ENCODE measurements at regions of chr17 and their contacts with region 1.

Region 1: DNA sequence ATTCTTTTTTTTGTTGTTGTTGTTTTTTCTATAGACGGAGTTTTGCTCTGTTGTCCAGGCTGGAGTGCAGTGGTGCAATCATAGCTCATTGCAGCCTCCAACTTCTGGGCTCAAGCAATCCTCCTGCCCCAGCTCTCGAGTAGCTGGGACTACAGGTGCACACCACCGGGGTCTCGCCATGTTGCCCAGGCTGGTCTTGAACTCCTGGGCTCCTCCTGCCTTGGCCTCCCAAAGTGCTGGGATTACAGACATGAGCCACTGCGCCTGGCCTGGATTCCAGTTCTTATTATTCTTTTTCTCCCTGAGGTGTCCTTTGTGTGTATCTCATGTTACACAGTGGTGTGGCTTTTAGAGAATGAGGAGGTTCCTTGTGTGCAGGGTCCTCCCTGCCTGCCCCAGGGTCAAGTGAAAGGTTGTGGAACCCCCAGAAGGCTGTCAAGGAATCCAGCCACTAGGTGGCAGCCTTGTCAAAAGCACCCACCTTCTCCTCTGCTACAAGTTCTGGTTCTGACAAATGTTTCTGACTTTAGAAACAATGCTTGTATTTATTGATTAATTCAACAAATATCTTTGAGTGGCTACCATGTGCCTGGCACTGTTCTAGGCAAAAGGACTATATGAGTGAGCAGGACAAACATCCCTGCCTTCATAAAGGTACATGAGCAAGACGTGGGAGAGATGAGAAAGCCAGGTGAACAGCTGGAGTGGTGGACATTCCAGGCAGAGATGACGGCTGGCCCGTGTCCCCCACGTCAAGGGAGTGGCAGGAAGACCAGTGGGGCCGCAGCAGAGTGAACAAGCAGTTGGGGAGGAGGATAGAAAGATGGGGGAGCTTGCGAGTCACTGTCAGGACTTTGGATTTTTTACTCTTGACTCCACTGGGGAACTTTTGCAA is 112.4 kb downstream of the SPECC1 start:
- DNase-seq: peak; percentile 47 to 59
- ATAC-seq: peak in 2 of 4 donors; percentile 35 to 62
- H3K4me3 ChIP-seq: no peak overlapping the region
- H3K27ac ChIP-seq: no peak overlapping the region
- H3K4me1 ChIP-seq: peaks cover 10% of the 10 kb centered on the region
- H3K27me3 ChIP-seq: no peaks in the 10 kb centered on the region
- CTCF ChIP-seq: peak; percentile 77

Region 2: GRCh38 chr17:19992803-19993713 is 128.5 kb before region 1 on chr17:
- intact Hi-C with region 1: loop called (anchors 2 to 5 kb)
- DNase-seq: peak; percentile 87 to 93
- ATAC-seq: peak; percentile 99 to 100 (median 99)
- H3K4me3 ChIP-seq: no peak overlapping the region
- H3K27ac ChIP-seq: no peak overlapping the region
- H3K4me1 ChIP-seq: peaks cover 4% of the 10 kb centered on the region
- H3K27me3 ChIP-seq: no peaks in the 10 kb centered on the region
- CTCF ChIP-seq: peak; percentile 79

Region 3: GRCh38 chr17:20009302-20010098 is 112.1 kb before region 1 on chr17 and contains the start of gene SPECC1:
- intact Hi-C with region 1: loop called in 1 of 2 experiments (anchors 5 kb)
- DNase-seq: peak; percentile 85 to 89
- ATAC-seq: peak; percentile 46 to 98 (median 95)
- H3K4me3 ChIP-seq: peak within 1 kb of the TSS; percentile 72
- H3K27ac ChIP-seq: peak within 1 kb of the TSS; percentile 43
- H3K4me1 ChIP-seq: peaks cover 4% of the 10 kb centered on the region
- H3K27me3 ChIP-seq: peaks cover 0 to 63% (median 7%) of the 10 kb centered on the region in 3 donors
- CTCF ChIP-seq: peak; percentile 97
- total RNA-seq, gene SPECC1: 4.7 to 11.3 (median 9.6) TPM

Region 4: DNA sequence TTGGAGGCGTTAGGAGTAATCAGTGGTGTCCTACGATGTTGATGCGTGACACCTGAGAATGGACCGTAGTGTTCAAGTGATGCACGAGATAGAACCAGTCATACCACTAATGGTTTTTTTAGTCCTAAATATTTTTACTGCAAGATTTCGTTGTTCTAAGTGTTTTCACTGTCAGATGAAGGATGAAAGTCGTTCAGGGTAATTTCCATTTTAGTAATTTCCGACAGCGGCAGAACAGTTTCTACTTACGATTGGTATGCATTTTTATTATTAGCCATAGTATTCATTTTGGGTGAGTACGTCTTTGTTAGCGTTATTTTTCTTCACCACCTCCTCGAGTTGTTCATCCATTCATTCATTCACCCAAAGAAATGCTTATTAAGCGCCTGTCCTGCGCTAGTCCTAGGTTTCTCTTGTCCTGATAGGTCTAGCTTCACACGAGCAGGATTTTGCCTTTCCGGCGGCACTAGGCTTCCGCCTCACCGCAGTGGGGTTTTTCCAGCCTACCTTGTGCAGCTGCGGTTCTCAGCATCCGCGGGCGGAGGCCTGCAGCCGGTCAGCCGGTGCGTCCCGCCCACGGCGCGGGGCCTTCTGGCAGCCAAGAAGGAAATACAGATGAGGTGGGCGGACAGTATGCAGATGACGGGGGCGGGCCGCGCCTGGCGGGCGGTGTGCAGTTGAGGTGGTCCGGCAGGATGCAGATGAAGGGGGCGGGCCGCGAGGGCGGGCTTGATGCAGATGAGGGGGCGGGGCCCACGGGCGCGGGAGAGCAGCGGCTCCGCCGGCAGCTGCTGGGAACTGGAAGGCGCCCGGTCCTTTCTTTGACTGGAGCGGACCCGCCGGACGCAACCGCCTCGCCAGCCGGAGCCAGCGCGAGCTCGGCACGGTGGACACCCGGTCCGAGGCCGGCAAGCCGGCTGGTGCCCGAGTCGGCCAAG is 33.9 kb after region 1 on chr17:
- intact Hi-C with region 1: no loop called
- DNase-seq: peak; percentile 95 to 96
- ATAC-seq: peak; percentile 92 to 99 (median 97)
- H3K4me3 ChIP-seq: peak overlapping the region; percentile 75
- H3K27ac ChIP-seq: no peak overlapping the region
- H3K4me1 ChIP-seq: peaks cover 8% of the 10 kb centered on the region
- H3K27me3 ChIP-seq: peaks cover 3 to 38% (median 4%) of the 10 kb centered on the region in 3 donors
- CTCF ChIP-seq: no peak

Region 5: DNA sequence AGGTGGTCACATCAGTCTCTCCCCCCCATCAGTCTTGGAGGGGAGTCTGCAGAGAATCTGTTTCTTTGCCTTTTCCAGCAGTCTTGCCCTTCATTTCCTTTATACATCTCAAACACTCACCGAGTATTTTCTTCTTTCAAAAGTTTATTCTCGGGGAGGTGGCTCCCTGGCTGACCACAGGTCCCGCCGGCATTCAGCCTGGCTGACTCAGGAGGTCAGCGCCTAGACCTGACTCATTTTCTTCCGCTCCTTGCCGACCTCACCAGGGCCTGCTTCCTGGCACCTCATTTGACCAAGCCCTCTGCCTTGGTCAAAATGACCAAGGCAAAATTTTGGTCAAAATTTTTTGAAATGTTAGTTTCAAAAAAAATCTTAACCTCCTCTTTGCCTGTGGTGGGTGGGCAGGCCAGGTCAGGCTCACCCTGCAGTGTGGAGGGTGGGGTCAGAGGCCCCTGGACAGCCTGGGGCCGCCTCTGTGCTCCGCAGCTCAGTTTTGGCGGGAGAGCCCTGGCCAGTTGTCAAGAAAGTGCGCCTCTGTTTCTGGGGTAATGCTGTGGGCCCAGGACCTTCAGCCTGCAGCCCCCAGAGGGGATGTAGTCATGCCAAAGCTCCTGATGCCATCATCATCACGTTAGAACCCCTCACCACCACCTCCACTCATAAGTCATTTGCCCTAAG is 53.1 kb after region 1 on chr17:
- intact Hi-C with region 1: no loop called
- DNase-seq: no peak
- ATAC-seq: no peak
- H3K4me3 ChIP-seq: no peak overlapping the region
- H3K27ac ChIP-seq: no peak overlapping the region
- H3K4me1 ChIP-seq: no peaks in the 10 kb centered on the region
- H3K27me3 ChIP-seq: peaks cover 0 to 4% (median 4%) of the 10 kb centered on the region in 3 donors
- CTCF ChIP-seq: no peak

Region 6: DNA sequence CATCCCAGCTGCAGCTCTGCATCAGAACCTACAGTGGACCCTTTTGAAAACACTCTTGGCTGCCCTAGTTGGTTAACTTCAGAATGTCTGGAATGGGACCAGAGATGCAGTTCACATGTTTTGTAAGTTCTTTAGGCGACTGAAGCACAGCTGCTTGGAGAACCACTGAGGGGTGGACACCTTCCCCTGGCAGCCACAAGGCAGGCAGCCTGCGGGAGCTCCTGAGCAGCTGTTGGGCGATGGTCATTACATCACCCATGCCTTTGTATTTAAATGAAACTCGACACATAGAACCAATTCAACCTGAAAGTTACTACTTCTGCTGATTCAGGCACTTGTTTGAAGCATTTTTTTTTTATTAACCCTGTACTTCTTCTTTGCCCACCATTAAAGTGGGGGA is 194.2 kb after region 1 on chr17:
- intact Hi-C with region 1: loop called in 1 of 2 experiments (anchors 10 kb)
- DNase-seq: no peak
- ATAC-seq: no peak
- H3K4me3 ChIP-seq: no peak overlapping the region
- H3K27ac ChIP-seq: no peak overlapping the region
- H3K4me1 ChIP-seq: no peaks in the 10 kb centered on the region
- H3K27me3 ChIP-seq: no peaks in the 10 kb centered on the region
- CTCF ChIP-seq: no peak

Measured in psoas muscle (tissue), 8 donors.